ENCODE measurements at regions of chr20 and their contacts with region 1.

Region 1: GRCh38 chr20:47196091-47197081 is 160.1 kb downstream of the ZMYND8 start:
- DNase-seq: peak; percentile 69 to 86
- ATAC-seq: peak; percentile 71 to 73
- H3K4me3 ChIP-seq: no peak overlapping the region
- H3K27ac ChIP-seq: peak overlapping the region; percentile 75 to 87
- H3K4me1 ChIP-seq: peaks cover 22% of the 10 kb centered on the region
- CTCF ChIP-seq: peak; percentile 98
- EP300 ChIP-seq: no peak
- POLR2A ChIP-seq: no peak
- RAD21 ChIP-seq: peak; percentile 96 to 98

Region 2: GRCh38 chr20:46752728-46753127 is 443.7 kb before region 1 on chr20:
- CTCF ChIA-PET with region 1: interaction called, 24 read pairs
- POLR2A ChIA-PET with region 1: no interaction called
- DNase-seq: peak; percentile 33 to 69
- ATAC-seq: peak; percentile 54 to 69; a peak in 4 of 6 replicates
- H3K4me3 ChIP-seq: no peak overlapping the region
- H3K27ac ChIP-seq: peak overlapping the region; percentile 29 to 44; a peak in 5 of 6 replicates
- H3K4me1 ChIP-seq: peaks cover 5% of the 10 kb centered on the region; the same call in 2 of the 3 replicates
- CTCF ChIP-seq: peak; percentile 84
- EP300 ChIP-seq: no peak
- POLR2A ChIP-seq: no peak
- RAD21 ChIP-seq: peak; percentile 85 to 89

Region 3: DNA sequence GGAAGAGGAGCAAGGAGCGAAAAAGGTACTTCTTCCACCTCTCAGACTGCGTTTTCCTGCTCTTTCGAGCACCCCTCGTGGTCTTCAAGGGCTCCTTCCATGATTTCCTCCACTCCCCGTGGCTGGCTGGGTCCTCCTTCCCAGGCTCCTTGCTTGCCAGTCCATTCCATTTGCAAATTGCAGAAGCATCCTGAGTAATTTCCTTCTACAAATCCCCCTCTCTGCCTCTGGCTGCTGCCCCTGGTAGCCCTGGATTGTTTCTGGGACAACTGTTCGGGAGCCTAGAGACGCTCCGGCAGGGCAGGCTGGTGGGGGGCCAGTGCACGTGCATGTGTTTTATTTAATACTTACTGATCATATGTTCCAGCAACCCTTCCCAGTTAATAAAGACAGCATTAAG is 13.0 kb before region 1 on chr20:
- CTCF ChIA-PET with region 1: interaction called, 18 read pairs
- POLR2A ChIA-PET with region 1: no interaction called
- DNase-seq: no peak
- ATAC-seq: no peak
- H3K4me3 ChIP-seq: no peak overlapping the region
- H3K27ac ChIP-seq: no peak overlapping the region
- H3K4me1 ChIP-seq: no peaks in the 10 kb centered on the region
- CTCF ChIP-seq: no peak
- EP300 ChIP-seq: no peak
- POLR2A ChIP-seq: no peak
- RAD21 ChIP-seq: no peak

Region 4: DNA sequence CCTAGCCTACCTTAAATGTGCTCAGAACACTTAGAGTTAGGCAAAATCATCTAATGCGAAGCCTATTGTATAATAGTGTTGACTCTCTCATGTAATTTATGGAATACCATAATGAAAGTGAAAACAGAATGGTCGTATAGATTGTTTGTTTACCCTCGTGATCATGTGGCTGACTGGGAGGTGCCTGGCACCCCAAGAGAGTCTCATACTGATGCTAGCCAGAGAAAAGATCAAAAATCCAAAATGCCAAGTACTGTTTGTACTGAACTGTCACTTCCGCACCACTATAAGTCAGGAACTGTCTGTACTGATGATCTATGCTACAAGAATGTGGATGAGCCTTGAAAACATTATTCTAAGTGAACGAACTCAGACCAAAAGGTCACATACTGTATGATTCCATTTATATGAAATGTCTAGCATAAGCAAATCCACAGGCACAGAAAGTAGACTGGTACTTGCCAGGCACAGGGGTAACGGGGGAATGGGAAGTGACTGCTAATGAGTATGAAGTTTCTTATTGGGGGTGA is 137.7 kb after region 1 on chr20:
- CTCF ChIA-PET with region 1: interaction called, 3 read pairs
- POLR2A ChIA-PET with region 1: interaction called, 11 read pairs
- DNase-seq: peak; percentile 77 to 91
- ATAC-seq: peak; percentile 90 to 94
- H3K4me3 ChIP-seq: peak overlapping the region; percentile 34
- H3K27ac ChIP-seq: peak overlapping the region; percentile 94 to 97
- H3K4me1 ChIP-seq: peaks cover 70% of the 10 kb centered on the region
- CTCF ChIP-seq: no peak
- EP300 ChIP-seq: peak; percentile 79 to 93; a peak in 3 of 5 replicates
- POLR2A ChIP-seq: no peak
- RAD21 ChIP-seq: peak; percentile 20 to 54; a peak in 4 of 5 replicates

Region 5: DNA sequence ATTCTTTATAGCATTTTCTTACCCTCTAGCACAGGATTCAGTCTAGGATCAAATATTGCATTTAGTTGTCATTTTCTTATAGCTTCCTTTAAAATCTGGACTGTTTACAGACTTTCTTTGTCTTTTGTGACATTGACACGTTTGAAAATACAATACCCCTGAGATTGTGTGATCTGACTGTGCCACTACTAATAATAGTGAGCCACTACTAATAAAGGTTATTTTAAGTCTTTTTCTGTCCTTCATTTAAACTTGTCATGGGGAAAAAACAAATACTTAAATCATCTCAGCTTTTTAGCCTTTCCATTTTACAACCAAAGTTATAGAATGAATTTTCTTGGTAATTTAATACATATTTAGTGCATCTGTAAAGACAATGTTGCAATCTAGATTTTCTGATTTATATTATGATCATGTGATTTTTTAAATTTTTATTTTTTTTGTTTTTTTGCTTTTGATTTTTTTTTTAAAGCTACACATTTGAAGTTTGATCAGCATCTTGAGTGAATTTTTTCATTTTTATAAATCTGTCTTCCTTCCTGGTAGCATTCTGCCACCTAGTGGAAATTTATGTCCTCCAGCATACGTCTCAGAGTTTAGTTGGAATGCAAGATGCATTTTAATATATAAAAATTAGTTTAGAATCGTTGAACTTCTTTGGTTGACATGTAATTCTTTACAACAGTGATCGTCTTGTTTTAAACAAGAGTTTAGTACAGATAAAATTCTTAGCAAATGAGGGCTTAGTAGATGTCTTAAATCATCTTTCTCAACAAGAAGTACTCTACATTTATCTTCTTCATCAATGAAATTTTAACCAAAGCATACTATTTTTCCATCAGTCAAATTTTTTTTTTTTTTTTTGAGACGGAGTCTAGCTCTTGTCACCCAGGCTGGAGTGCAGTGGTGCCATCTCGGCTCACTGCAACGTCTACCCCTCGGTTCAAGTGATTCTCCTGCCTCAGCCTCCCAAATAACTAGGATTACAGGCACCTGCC is 424.7 kb after region 1 on chr20:
- CTCF ChIA-PET with region 1: interaction called, 18 read pairs
- POLR2A ChIA-PET with region 1: no interaction called
- DNase-seq: peak in 1 of 2 experiments; percentile 71
- ATAC-seq: peak; percentile 37 to 39; a peak in 2 of 6 replicates
- H3K4me3 ChIP-seq: no peak overlapping the region
- H3K27ac ChIP-seq: peak overlapping the region; percentile 58 to 60
- H3K4me1 ChIP-seq: peaks cover 47% of the 10 kb centered on the region
- CTCF ChIP-seq: peak; percentile 93
- EP300 ChIP-seq: no peak
- POLR2A ChIP-seq: no peak
- RAD21 ChIP-seq: peak; percentile 86 to 92

Measured in A549 (cell line).